Posterior cingulate gyrus (tissue), 11 donors: ENCODE measurements at regions of chr1 and their contacts with region 1.

Region 1: GRCh38 chr1:223338811-223339746 is 24.9 kb downstream of the SUSD4 start:
- DNase-seq: no peak

Region 2: DNA sequence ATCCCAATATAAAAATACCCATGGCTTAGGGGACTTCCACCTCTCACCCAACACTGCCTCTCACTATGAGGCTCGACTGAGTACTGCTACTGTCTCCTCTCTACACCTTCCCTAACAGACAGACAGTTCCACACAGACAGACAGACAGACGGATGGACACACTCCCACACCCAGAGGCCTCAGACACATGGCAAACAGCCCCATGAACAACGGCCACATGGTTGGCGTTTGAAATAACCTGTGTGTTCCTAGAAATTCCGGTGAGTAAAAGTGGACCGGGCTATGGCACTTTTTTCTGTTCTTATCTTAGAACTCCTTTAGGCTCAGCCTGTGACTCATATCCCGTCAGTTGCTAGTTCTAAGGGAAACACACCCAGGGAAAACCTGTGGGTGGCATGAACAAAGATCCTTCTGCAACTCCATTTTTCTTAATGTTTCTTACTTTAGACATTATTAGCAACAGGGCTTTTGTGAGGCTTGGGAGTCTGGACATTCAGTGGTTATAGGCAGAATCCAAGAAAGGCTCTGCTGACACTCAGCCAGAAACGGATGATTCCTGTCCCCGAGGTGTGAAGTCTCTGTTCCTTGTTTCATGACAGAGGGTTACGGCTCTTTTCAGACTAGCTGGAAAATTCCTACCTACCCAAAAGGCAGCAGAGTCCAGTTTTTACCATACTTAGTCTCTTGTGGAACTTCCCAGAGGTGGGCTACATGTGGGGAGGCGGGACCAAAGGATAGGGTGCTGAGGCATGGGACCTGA is 105.5 kb before region 1 on chr1:
- intact Hi-C with region 1: loop called (anchors 5 kb)
- DNase-seq: peak in 3 of 10 donors; percentile 34 to 44 (median 42)

Region 3: GRCh38 chr1:223298701-223299100 is 40.4 kb before region 1 on chr1:
- intact Hi-C with region 1: no loop called
- DNase-seq: no peak

Region 4: DNA sequence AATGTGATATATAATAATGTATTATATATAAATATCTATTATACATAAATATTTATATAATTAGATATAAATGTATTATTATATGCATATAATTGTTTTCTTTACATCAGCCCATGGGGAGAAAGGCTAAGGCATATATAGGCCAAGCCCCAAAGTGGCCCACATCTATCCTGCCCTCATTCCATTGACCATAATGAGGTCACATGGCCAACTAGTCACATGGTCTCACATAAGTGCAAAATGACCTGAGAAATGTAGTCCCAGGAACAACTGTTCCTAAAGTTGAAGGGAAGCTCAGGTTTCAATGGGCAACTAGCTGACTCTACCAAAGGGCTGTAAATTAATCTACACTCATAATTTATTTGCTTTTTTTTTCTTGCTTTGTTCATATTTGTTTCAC is 39.7 kb after region 1 on chr1:
- intact Hi-C with region 1: no loop called
- DNase-seq: no peak